ENCODE measurements at regions of chr14 and their contacts with region 1.

Region 1: GRCh38 chr14:64109821-64110554 is 184.2 kb downstream of the ESR2 start:
- DNase-seq: no peak
- H3K4me3 ChIP-seq: no peak overlapping the region
- H3K27ac ChIP-seq: peak overlapping the region; percentile 59 to 93 (median 92)
- H3K4me1 ChIP-seq: peaks cover 22 to 30% of the 10 kb centered on the region in 2 donors
- H3K27me3 ChIP-seq: no peaks in the 10 kb centered on the region
- CTCF ChIP-seq: no peak
- POLR2A ChIP-seq: no peak

Region 2: GRCh38 chr14:64040044-64040443 is 69.9 kb before region 1 on chr14:
- intact Hi-C with region 1: loop called (anchors 10 kb)
- DNase-seq: no peak
- H3K4me3 ChIP-seq: no peak overlapping the region
- H3K27ac ChIP-seq: peak overlapping the region in 1 of 3 donors; percentile 28
- H3K4me1 ChIP-seq: peaks cover 19 to 23% of the 10 kb centered on the region in 2 donors
- H3K27me3 ChIP-seq: no peaks in the 10 kb centered on the region
- CTCF ChIP-seq: peak in 3 of 6 experiments; percentile 19 to 33 (median 32)
- POLR2A ChIP-seq: no peak